Caco-2 (cell line): ENCODE measurements at regions of chrX and their contacts with region 1.

Region 1: GRCh38 chrX:17689971-17690409 is 47.3 kb upstream of the SCML1 start:
- DNase-seq: peak; percentile 42 to 49
- H3K4me3 ChIP-seq: no peak overlapping the region
- H3K4me3 Mint-ChIP-seq: no peak overlapping the region
- H3K27ac Mint-ChIP-seq: no peak overlapping the region
- H3K4me1 ChIP-seq: no peaks in the 10 kb centered on the region
- H3K4me1 Mint-ChIP-seq: no peaks in the 10 kb centered on the region
- H3K27me3 ChIP-seq: no peaks in the 10 kb centered on the region
- H3K27me3 Mint-ChIP-seq: no peaks in the 10 kb centered on the region
- CTCF ChIP-seq: peak; percentile 44 to 45

Region 2: GRCh38 chrX:17535229-17535628 is 154.8 kb before region 1 on chrX:
- CTCF ChIA-PET with region 1: no interaction called
- POLR2A ChIA-PET with region 1: no interaction called
- intact Hi-C with region 1: loop called (anchors 2 kb)
- DNase-seq: peak in 1 of 2 experiments; percentile 37
- H3K4me3 ChIP-seq: no peak overlapping the region
- H3K4me3 Mint-ChIP-seq: no peak overlapping the region
- H3K27ac Mint-ChIP-seq: no peak overlapping the region
- H3K4me1 ChIP-seq: no peaks in the 10 kb centered on the region
- H3K4me1 Mint-ChIP-seq: no peaks in the 10 kb centered on the region
- H3K27me3 ChIP-seq: no peaks in the 10 kb centered on the region
- H3K27me3 Mint-ChIP-seq: no peaks in the 10 kb centered on the region
- CTCF ChIP-seq: peak; percentile 15 to 24